Psoas muscle (tissue), 8 donors: ENCODE measurements at regions of chr1 and their contacts with region 1.

Region 1: DNA sequence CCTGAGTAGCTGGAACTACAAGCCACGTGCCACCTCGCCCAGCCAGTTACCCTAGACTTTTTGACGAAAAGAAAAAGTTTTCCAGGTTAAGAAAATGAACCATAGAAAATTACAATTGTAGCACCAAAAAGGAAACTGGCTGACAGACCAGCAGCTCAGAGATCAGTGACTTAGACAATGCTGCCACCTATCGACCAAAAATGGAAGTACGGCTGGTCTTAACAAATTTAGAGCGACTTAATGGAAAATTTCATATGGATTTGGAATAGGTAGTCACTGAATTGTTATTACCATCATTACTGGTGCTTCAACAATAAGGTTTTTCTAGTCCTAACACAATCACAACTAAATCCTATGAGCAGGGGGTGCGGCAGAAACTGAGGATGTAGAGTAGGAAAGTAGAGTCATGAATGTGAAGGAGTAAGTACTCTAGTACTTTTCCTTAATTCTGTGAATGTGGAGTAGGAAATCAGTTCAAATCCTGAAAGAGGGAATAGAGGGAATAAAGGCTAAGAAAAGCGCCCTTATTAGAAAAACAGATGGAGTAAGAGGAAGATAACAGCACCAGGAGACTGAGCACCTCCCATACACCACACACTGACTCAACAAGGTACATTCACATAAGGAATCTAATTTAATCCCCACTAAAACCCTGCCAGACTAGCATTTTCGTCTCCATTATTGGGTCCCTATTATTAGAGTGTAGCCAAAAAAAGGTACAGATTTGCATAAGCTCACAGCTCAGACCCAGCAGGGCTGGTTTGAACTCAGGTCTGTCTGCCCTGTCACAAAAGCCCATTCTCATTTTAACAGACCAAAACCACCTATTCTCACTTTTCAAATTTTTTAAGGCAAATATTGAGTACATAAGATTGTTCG is 37.9 kb upstream of the MGST3 start:
- DNase-seq: peak; percentile 30 to 61
- ATAC-seq: peak; percentile 52 to 76 (median 66)
- H3K4me3 ChIP-seq: no peak overlapping the region
- H3K27ac ChIP-seq: no peak overlapping the region
- H3K4me1 ChIP-seq: no peaks in the 10 kb centered on the region
- H3K27me3 ChIP-seq: no peaks in the 10 kb centered on the region
- CTCF ChIP-seq: peak; percentile 98

Region 2: GRCh38 chr1:165144757-165145397 is 448.3 kb before region 1 on chr1:
- intact Hi-C with region 1: loop called in 1 of 2 experiments (anchors 5 kb)
- DNase-seq: peak; percentile 25 to 53
- ATAC-seq: peak; percentile 53 to 92 (median 79)
- H3K4me3 ChIP-seq: no peak overlapping the region
- H3K27ac ChIP-seq: no peak overlapping the region
- H3K4me1 ChIP-seq: no peaks in the 10 kb centered on the region
- H3K27me3 ChIP-seq: peaks cover 2 to 6% (median 2%) of the 10 kb centered on the region in 3 donors
- CTCF ChIP-seq: peak; percentile 79

Region 3: DNA sequence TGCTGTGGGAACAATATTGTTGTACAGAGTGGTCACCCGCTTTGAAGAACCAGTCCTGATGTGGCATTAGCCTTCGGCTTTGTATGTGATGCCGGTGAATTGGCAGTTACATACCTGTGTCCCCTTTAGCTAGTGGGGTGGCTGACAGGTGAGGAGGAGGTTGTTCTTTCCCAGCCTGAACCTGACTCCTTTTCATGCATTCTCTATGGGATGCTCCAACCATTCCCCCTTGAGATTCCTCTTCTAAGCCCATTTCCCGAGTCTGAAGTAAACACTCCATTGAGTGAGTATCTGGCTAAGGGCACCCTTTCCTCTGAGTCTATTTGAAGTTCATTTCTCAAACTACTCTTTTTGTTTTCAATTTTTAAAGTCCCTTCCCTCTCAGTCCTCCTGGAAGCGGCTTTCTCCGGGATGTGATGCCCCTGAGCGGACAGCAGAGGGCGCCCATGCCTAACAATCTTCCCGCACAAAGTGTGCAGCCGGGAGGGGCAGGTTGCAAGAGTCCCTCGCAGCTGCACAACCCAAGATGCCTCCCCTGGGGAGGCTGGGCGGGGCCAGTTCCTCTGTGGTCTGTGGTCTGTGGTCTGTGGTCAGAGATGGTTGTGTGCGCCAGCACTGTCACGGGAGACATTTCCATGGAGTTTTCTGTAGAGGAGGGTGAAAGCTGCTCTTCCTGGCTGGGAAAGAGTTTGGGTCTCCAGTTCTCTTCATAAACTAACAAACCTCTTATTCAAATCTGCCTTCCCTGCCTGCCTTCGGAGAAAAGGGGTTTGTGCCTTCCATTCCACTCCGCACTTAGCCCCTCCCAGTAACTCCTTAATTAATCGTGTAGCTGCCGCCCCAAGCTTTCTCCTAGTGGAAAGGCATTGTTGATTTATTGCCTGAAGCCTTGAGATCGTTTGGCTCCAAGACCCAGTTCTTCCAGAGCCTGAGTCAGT is 200.3 kb before region 1 on chr1:
- intact Hi-C with region 1: loop called in 1 of 2 experiments (anchors 2 kb)
- DNase-seq: peak; percentile 89 to 93
- ATAC-seq: peak; percentile 93 to 96 (median 94)
- H3K4me3 ChIP-seq: peak overlapping the region; percentile 23
- H3K27ac ChIP-seq: no peak overlapping the region
- H3K4me1 ChIP-seq: no peaks in the 10 kb centered on the region
- H3K27me3 ChIP-seq: no peaks in the 10 kb centered on the region
- CTCF ChIP-seq: peak; percentile 92

Region 4: DNA sequence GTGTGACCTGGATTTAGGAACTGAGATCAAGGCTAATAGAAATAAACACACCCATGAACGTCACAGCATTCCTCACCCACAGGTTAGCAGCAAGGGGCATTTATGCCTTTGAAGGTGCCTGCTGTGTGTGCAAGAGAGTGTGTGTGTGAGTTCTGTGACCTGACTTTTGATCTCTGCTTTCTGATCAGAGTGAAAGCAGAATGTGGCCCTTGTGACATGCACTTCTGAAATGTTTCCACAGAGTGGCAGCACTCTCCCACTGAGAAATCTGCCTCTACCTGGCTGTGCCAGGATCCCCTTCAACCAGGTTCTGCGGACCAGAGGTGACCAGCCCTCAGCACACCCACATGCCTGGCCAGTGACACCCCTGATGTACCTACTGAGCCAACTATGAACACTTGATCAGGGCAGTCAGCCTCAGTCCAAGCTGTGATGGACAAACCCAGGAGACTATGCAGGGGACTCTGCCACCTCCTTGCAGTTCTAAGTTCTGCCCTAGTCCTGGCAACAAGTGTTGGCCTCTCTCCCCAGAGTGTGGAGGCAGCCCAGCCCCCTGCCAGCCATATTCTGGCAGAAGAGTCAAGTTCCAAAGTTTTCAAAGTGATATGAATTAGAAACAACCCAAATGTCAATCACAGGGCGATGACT is 189.2 kb before region 1 on chr1:
- intact Hi-C with region 1: loop called in 1 of 2 experiments (anchors 1 kb)
- DNase-seq: no peak
- ATAC-seq: peak; percentile 50 to 72 (median 58)
- H3K4me3 ChIP-seq: no peak overlapping the region
- H3K27ac ChIP-seq: no peak overlapping the region
- H3K4me1 ChIP-seq: peaks cover 9% of the 10 kb centered on the region
- H3K27me3 ChIP-seq: peaks cover 0 to 6% (median 0%) of the 10 kb centered on the region in 3 donors
- CTCF ChIP-seq: peak; percentile 71

Region 5: DNA sequence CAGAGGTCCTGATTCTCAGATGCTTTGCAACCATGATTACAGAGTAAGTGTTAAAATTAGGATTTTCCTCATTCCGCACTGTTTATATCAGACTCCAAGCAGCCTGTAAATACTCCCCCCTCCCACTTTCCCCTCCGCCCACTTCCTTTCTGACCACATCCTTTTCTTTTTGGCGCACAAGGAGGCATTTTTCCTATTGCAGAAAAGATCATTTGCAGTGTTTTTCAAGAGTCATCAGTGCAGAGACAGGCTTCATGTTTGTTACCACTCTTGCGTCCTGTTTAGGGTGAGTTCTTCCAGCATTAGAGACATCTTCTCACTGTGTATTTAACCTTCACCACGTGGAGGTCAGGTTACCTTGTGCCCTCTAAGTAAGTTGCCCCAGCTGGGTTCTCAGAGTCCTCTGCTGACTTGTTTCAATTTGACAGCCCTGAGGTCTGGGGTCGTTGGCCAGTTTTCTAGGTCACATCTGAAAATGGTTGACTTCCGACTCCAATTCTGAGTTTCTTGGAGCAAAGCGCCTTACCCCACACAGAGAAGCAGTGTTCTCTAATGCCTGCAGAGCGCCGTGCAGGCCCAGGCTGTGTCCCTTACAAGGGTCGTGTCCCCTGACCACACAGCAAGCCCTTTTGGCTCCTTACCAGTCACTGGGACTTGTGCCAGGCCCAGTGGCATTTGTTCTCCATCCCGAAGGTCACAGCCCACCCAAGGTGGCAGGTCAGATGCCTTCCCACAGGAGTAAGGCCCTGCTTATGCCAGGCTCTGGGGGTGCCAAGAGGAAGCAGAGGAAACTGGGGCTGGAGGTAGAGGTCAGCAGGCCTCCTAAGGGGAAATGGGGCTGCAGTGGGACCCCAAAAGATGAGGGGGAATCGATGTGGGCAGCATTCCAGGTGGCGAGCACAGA is 488.0 kb after region 1 on chr1:
- intact Hi-C with region 1: no loop called
- DNase-seq: no peak
- ATAC-seq: peak in 1 of 4 donors; percentile 33
- H3K4me3 ChIP-seq: no peak overlapping the region
- H3K27ac ChIP-seq: no peak overlapping the region
- H3K4me1 ChIP-seq: no peaks in the 10 kb centered on the region
- H3K27me3 ChIP-seq: no peaks in the 10 kb centered on the region
- CTCF ChIP-seq: no peak